ENCODE measurements at regions of chr7 and their contacts with region 1.

Region 1: DNA sequence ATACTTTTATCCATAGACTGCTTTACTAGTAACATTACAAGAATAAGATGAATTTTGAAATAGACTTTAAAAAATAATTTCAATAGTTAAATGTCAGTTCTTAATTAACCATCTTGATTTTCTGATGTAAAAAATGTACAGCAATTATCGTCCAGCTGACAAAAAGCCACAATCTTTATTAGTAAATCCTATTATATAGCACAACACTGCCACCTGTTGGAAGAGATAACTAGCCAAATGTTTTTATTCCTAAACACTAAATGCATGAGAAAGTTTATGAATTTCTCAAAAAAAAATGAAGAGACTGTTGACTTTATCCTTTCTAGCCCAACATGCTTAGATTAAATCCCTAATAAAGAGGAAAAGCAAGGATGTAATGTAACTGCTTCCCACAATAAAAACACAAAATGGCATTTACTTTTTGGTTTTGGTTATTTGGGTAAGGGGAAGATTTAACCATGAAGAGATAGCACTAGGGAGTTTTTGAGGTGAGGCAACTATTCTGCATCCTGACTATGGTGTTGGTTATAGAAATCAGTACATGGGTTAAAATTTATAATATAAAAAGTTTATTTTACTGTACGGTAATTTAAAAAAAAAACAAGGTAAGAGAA is 8.0 kb downstream of the COA1 start:
- DNase-seq: no peak
- ATAC-seq: peak; percentile 25
- H3K4me3 Mint-ChIP-seq: no peak overlapping the region
- H3K27ac Mint-ChIP-seq: no peak overlapping the region
- H3K4me1 Mint-ChIP-seq: peaks cover 16% of the 10 kb centered on the region
- H3K27me3 Mint-ChIP-seq: no peaks in the 10 kb centered on the region
- CTCF ChIP-seq: peak; percentile 61

Region 2: GRCh38 chr7:42940985-42941847 is 780.1 kb before region 1 on chr7:
- CTCF ChIA-PET with region 1: interaction called, 19 read pairs
- POLR2A ChIA-PET with region 1: interaction called, 4 read pairs
- intact Hi-C with region 1: loop called (anchors 1 kb)
- DNase-seq: peak; percentile 51
- ATAC-seq: peak; percentile 57
- H3K4me3 Mint-ChIP-seq: no peak overlapping the region
- H3K27ac Mint-ChIP-seq: no peak overlapping the region
- H3K4me1 Mint-ChIP-seq: peaks cover 6% of the 10 kb centered on the region
- H3K27me3 Mint-ChIP-seq: no peaks in the 10 kb centered on the region
- CTCF ChIP-seq: peak; percentile 80

Region 3: DNA sequence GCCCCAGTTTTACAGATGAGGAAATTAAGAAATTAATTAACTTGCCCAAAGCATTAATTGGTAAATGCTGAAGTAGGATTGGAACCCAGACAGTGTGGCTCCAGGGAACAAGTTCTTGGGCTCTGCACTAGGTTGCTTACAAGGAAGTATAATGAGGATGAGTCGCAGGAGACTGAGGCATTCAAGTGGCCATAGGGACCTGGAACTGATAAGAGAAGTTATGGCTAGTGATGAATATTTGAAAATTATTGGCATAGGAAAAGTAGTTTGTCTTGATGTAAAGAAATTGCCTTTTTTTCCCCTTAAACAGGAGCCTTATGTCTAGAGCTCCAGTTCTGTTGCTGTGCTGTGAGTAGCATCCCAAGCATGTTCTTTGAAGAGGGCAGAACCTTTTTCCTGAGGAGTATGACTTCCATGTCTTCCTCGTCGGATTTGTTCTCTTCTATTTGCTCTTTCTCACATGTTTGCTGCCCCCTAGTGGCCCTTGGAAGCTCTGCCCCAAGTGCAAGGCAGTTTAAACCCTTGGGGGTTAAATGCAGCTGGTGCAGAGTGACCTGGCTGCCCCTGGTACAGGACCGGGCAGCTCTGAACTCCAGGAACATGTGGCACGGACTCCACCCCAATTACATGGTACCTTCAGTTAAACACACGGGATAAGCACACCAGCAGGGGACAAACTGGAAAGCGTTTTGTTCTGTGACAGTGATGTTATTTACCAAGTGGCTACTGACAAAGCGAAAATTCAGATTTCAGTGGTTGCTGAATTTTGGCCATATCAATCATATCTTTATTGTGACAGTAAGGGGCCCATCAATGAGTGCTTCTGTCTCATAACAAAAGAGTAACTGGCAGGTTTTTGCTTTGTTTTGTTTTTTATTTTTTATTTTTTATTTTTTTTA is 460.1 kb before region 1 on chr7:
- CTCF ChIA-PET with region 1: no interaction called
- POLR2A ChIA-PET with region 1: no interaction called
- intact Hi-C with region 1: loop called (anchors 1 kb)
- DNase-seq: peak; percentile 47
- ATAC-seq: peak; percentile 58
- H3K4me3 Mint-ChIP-seq: no peak overlapping the region
- H3K27ac Mint-ChIP-seq: no peak overlapping the region
- H3K4me1 Mint-ChIP-seq: no peaks in the 10 kb centered on the region
- H3K27me3 Mint-ChIP-seq: peaks cover 5% of the 10 kb centered on the region
- CTCF ChIP-seq: no peak

Region 4: GRCh38 chr7:43439631-43440401 is 281.5 kb before region 1 on chr7:
- CTCF ChIA-PET with region 1: no interaction called
- POLR2A ChIA-PET with region 1: no interaction called
- intact Hi-C with region 1: loop called (anchors 5 kb)
- DNase-seq: no peak
- ATAC-seq: no peak
- H3K4me3 Mint-ChIP-seq: no peak overlapping the region
- H3K27ac Mint-ChIP-seq: no peak overlapping the region
- H3K4me1 Mint-ChIP-seq: no peaks in the 10 kb centered on the region
- H3K27me3 Mint-ChIP-seq: peaks cover 4% of the 10 kb centered on the region
- CTCF ChIP-seq: peak; percentile 29

Region 5: DNA sequence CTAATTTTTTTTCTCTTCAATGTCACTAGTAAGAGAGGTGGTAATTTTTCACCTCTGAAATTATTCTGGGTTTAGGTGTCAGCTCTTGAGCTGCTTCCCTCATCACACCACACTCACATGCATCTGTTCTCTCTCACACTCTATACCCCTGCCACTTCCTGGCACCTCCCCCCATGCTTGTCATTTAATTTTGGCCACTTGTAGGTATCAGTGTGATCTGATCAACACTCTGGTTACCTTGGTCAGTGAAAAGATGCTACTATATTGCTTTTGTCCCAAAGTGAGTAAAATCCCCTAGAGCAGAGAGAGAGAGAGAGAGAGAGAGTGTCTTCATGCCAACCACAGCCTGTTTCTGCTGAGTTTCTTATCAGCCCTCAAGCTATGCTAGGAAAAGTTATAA is 95.8 kb before region 1 on chr7:
- CTCF ChIA-PET with region 1: no interaction called
- POLR2A ChIA-PET with region 1: no interaction called
- intact Hi-C with region 1: no loop called
- DNase-seq: no peak
- ATAC-seq: peak; percentile 76
- H3K4me3 Mint-ChIP-seq: peak overlapping the region; percentile 51
- H3K27ac Mint-ChIP-seq: peak overlapping the region; percentile 85
- H3K4me1 Mint-ChIP-seq: peaks cover 84% of the 10 kb centered on the region
- H3K27me3 Mint-ChIP-seq: no peaks in the 10 kb centered on the region
- CTCF ChIP-seq: no peak

Region 6: DNA sequence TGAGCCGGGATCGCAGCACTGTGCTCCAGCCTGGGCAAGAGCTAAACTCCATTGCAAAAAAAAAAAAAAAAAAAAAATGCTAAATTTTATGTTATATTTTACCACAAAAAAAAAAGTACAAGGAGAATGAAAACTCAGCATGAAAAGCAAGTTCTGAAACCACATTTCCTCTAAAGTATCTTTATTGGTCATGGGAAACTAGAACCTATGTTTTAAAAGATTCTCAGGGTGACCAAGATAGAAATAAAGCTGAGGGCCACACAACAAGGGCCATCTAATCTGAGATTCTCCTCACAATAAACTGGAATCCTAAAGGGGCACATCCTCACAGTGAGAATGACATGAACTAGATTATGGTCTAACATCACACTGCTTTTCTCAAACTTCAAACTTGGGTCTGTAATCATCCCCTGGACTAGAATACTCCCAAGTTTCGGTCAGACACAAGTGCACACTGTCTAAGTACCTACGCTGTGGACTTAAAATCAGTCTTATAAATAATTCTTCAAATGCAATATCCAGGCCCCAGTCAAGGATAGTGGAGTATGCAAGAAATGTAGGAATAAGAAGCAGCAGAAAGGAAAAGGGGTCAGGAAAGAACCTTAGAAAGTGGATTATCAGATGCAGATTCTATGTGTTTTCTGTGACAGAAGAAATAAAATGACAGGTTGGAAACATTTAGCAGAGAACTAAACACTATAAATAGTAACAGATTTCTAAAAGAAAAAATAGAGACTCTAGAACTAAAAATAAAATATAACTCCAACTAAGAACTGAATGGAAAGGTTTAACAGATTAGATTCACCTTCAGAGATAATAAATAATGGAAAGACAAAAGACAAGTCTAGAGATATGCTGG is 41.9 kb before region 1 on chr7:
- CTCF ChIA-PET with region 1: no interaction called
- POLR2A ChIA-PET with region 1: no interaction called
- intact Hi-C with region 1: no loop called
- DNase-seq: no peak
- ATAC-seq: no peak
- H3K4me3 Mint-ChIP-seq: peak overlapping the region; percentile 2
- H3K27ac Mint-ChIP-seq: peak overlapping the region; percentile 42
- H3K4me1 Mint-ChIP-seq: peaks cover 71% of the 10 kb centered on the region
- H3K27me3 Mint-ChIP-seq: no peaks in the 10 kb centered on the region
- CTCF ChIP-seq: no peak

Region 7: DNA sequence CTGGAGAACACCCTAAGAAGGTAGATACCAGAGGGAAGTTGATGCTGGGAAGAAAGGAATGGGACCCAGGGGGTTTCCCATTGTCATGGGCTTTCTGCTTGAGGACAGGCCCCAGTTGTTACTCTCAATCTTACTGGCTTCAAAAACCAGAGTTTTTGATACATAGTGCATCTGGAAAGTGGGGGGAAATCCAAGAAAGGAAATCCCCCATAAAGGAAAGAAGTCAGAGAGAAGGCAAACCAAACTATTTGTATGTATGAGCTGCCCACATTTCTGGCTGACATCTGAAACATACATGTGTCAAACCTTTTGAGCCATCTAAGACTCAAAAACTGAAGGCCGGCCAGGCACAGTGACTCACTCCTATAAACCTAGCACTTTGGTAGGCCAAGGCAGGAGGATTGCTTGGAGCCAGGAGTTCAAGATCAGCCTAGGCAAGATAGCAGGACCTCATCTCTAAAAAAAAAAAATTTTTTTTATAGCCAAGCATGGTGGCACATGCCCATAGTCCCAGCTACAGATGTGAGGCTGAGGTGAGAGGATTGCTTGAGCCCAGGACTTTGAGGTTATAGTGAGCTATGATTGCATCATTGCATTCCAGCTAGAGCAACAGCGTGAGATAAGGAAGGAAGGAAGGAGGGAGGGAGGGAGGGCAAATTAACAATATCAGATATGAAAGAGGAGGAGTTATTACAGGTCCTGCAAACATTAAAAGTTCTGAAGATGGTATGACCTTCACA is 14.7 kb after region 1 on chr7:
- CTCF ChIA-PET with region 1: interaction called, 3 read pairs
- POLR2A ChIA-PET with region 1: no interaction called
- intact Hi-C with region 1: loop called (anchors 1 kb)
- DNase-seq: no peak
- ATAC-seq: peak; percentile 21
- H3K4me3 Mint-ChIP-seq: no peak overlapping the region
- H3K27ac Mint-ChIP-seq: no peak overlapping the region
- H3K4me1 Mint-ChIP-seq: no peaks in the 10 kb centered on the region
- H3K27me3 Mint-ChIP-seq: no peaks in the 10 kb centered on the region
- CTCF ChIP-seq: no peak

Region 8: DNA sequence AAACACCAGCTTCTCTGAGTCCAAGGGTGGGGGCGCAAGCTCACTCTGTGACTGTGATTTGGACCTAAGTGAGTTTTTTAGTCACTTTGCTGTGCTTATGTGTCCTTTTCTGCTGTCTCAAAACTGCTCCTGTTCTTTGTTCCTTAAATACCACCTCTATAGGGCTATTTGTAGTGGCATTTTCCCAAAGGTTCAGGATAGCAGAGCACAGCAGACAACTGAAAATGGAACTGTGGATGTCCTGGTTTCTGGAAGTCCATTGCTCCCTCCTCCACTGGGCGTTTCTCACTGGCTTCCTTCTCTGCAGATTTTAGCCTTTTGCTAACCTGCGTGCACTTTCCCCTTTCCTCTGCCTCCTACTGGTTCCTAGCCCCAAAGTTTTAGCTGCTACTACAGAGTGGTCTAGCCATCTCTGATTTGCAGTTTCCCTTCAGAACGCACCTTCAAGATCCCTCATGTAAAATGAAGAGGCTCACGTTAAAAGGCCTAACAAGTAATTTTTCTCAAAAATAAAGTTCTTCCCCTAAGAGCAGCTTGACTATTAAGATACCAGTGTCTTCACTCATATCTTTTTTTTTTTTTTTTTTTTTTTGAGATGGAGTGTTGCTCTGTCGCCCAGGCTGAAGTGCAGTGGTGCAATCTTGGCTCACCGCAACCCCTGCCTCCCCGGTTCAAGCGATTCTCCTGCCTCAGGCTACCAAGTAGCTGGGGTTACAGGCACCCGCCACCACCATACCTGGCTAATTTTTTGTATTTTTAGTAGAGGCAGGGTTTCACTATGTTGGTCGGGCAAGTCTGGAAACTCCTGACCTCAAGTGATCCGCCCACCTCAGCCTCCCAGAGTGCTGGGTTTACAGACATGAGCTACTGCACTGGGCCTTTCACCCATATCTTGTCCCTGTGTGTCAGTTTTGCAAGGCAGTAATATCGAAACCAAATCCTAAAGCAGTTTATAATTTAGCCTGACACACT is 63.0 kb after region 1 on chr7:
- CTCF ChIA-PET with region 1: no interaction called
- POLR2A ChIA-PET with region 1: no interaction called
- intact Hi-C with region 1: no loop called
- DNase-seq: no peak
- ATAC-seq: no peak
- H3K4me3 Mint-ChIP-seq: no peak overlapping the region
- H3K27ac Mint-ChIP-seq: no peak overlapping the region
- H3K4me1 Mint-ChIP-seq: no peaks in the 10 kb centered on the region
- H3K27me3 Mint-ChIP-seq: no peaks in the 10 kb centered on the region
- CTCF ChIP-seq: no peak

Measured in activated B cell treated with CpG ODN at 0.5 μM for 24 hours (primary cell).